KBM-7 (cell line): ENCODE measurements at regions of chr17 and their contacts with region 1.

Region 1: GRCh38 chr17:7056386-7056785 is 12.5 kb upstream of the SLC16A11 start:
- DNase-seq: no peak

Region 2: DNA sequence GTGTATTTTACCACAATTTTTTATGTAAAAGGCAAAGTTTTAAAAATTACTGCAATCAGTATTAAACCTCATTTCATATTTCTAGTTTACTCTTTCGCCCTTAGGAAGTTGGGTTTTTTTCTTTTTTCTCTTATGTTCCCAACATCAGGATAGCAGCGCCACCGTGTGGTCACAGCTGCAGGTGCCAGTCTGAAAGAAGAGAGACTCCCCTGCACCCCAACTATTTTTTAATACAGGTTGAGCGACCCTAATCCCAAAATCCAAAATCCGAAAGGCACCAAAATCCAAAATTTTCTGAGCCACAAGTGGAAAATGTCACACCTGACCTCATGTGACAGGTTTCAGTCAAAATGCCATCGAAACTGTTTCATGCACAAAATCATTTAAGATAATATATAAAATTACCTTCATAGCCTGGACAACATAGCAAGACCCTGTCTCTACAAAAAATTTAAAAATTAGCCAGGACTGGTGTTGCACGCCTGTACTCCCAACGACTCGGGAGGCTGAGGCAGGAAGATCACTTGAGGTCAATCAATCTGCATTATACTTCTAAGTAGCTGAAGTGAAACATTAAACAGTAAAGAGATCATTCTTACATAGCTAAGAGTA is 80.0 kb after region 1 on chr17:
- in situ Hi-C with region 1: loop called (anchors 10 kb)
- DNase-seq: peak; percentile 78